Endothelial cell of umbilical vein (primary cell): ENCODE measurements at regions of chr1 and their contacts with region 1.

Region 1: DNA sequence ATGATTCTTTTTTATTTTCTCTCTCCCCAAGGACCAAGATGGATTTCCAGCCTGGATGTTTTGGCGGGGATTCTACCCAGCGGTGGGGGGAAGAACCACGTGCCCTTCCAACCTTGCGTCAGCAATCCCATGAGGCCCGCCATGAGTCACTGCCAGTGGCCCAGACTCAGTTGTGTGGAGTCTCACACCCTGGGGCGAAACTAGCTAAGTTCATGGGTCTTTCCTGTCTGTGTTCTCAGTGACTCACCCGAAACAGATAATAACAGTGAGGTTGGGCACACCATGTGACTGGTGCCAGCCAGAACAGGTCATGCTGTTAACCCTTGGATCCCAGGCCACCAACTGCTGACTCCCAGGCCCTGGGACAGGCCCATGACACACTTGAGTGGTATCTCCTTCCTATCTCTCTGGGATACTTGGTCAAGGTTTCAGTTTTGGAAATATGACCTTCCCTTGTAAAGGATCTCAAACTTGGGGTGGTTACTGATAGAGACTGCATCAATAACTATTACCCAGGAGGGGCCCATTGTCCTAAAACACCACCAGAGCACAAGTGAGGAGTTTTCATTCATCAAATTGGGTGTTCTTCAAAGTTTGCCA is 98.0 kb upstream of the DUSP10 start:
- DNase-seq: peak; percentile 45
- H3K4me3 ChIP-seq: no peak overlapping the region
- H3K27ac ChIP-seq: peak overlapping the region; percentile 4
- H3K4me1 ChIP-seq: peaks cover 16% of the 10 kb centered on the region
- H3K27me3 ChIP-seq: no peaks in the 10 kb centered on the region
- CTCF ChIP-seq: no peak
- POLR2A ChIP-seq: no peak

Region 2: DNA sequence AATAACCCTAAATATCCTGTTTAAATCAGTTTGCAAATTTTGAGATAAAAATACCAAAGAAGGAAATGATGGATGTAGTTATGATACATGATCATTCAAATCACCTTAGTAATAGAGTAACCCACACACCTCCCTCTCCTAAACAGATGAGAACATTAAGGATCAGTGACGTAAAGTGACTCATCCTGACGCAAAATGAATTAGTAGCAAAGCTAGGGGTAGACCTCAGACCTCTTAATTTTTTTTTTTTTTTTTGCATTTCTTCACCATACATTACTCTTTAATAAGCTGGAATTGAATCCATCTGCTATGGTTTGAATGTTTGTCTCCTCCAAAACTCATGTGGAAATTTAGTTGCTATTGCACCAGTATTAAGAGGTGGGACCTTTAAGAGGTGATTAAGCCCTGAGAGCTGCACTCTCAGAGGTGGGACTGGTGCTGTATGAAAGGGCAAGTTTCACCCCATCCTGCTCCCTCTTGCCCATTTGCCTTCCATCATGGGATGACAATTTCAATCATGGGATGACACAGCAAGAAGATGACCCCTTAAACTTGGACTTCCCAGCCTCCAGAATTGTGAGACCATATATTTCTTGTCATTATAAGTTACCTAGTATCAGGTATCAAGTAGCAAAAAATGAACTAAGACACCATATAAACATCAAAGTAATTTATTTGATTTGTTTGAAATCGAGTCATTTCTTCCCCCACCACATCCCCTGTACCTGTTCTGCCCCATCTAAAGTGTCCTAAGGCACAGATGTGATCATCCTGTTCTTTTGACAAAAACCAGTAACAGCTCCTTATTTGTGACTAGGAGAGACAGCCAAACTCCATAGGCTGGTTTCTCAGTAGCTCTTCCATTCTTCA is 16.6 kb after region 1 on chr1:
- CTCF ChIA-PET with region 1: interaction called, 3 read pairs
- POLR2A ChIA-PET with region 1: no interaction called
- dilution Hi-C with region 1: no loop called
- intact Hi-C with region 1: loop called (anchors 2 kb)
- DNase-seq: no peak
- H3K4me3 ChIP-seq: no peak overlapping the region
- H3K27ac ChIP-seq: no peak overlapping the region
- H3K4me1 ChIP-seq: no peaks in the 10 kb centered on the region
- H3K27me3 ChIP-seq: peaks cover 5% of the 10 kb centered on the region in 2 experiments
- CTCF ChIP-seq: no peak
- POLR2A ChIP-seq: no peak